RWPE1 (cell line): ENCODE measurements at regions of chr5 and their contacts with region 1.

Region 1: DNA sequence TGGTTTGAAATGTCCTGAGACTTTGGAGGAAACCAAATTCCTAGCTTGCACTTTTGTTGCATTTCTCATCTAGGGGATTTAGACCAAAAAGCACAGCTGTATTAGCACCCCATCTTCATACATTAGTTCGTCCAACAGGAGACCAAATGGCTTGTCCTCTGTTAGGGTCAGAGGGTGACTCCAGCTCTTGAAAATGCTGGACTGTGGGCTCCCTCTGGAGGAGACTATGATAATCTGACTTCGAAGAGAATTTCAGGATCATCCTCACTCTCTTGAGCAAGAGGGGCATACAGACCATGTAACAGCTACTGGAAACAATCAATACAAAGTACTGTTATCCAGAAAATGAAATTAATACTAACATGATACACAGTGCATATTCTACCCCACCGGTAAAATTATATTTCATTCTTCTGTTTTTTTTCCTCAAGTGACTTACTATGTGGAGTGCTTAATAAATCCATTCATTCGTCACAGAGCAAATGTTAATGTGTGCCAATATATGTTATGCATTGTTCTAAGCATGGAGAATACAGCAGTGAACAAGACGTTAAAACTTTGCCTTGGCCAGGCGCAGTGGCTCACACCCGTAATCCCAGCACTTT is 63.7 kb upstream of the PPP2CA start:
- DNase-seq: peak; percentile 88
- H3K27ac ChIP-seq: no peak overlapping the region
- CTCF ChIP-seq: peak; percentile 86

Region 2: DNA sequence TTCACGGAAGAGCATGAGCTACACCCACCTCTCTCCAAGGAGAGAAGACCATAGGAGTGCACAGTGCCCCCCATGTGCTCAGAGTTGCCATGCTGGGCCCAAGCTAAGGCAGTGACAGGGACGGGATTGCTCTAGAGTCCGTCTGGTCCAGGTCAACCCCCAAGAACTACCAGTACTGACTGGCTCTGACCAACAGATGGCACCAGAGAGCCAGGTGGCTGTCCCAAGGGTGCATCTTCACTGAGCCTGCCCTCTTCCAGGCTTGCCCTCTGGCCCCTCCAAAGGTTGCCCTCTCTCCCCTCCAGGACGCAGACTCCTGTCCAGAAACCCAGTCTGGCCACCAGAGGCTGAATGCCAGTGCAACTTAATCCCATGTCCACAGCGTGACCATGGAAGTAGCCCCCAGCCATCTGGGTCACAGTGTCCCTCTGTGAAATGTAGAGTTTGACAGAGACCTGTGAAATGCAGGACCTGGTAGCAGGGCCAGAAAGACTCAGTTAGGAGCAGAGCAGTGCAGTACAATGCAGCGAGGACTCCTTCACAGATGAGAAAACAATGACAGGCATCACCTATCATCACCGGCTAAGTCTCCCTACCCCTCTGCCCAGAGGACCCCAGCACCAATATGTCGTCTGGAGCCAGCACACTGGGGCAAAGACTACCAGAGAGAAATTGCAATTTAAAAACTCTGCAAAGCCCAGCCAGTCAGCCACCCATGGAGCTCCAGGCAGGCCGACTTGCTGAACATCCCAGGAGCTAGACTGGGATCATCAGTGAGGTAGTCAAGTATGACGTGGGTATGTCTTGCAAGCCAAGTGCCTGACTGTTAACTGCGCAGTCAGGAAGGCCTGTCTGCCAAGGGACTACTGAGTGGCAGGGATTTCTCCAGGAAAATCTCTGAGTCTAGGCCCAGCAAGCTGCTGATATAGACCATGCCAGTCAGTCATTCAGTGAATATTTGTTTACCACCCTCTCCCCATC is 105.2 kb before region 1 on chr5:
- CTCF ChIA-PET with region 1: interaction called, 78 read pairs
- POLR2A ChIA-PET with region 1: no interaction called
- DNase-seq: peak; percentile 90
- H3K27ac ChIP-seq: no peak overlapping the region
- CTCF ChIP-seq: peak; percentile 97

Region 3: GRCh38 chr5:134225618-134226440 is 63.8 kb before region 1 on chr5 and contains the start of gene PPP2CA:
- CTCF ChIA-PET with region 1: interaction called, 23 read pairs
- POLR2A ChIA-PET with region 1: no interaction called
- DNase-seq: peak; percentile 98
- H3K27ac ChIP-seq: peak within 1 kb of the TSS; percentile 96
- CTCF ChIP-seq: no peak

Region 4: GRCh38 chr5:134374232-134374631 is 84.6 kb after region 1 on chr5:
- CTCF ChIA-PET with region 1: interaction called, 10 read pairs
- POLR2A ChIA-PET with region 1: no interaction called
- DNase-seq: no peak
- H3K27ac ChIP-seq: no peak overlapping the region
- CTCF ChIP-seq: no peak

Region 5: DNA sequence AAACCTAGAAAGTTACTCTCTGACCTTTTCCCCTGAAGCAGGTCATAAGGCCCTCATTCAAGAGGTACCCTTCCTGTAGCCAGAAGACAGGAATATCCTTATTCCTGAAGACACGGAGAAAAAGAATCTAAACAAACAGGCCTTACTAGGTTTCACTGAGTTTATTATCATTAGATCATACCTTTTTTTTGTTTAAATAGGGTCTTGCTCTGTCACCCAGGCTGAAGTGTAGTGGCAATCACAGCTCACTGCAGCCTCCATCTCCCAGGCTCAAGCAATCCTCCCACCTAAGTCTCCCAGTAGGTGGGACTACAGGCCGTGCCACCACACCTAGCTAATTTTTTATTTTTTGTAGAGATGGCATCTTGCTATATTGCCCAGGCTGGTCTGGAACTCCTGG is 133.8 kb after region 1 on chr5:
- CTCF ChIA-PET with region 1: no interaction called
- POLR2A ChIA-PET with region 1: no interaction called
- DNase-seq: no peak
- H3K27ac ChIP-seq: no peak overlapping the region
- CTCF ChIP-seq: no peak